ENCODE measurements at regions of chr9 and their contacts with region 1.

Region 1: GRCh38 chr9:4640027-4640426 is 22.1 kb upstream of the PLPP6 start:
- DNase-seq: no peak
- ATAC-seq: no peak

Region 2: DNA sequence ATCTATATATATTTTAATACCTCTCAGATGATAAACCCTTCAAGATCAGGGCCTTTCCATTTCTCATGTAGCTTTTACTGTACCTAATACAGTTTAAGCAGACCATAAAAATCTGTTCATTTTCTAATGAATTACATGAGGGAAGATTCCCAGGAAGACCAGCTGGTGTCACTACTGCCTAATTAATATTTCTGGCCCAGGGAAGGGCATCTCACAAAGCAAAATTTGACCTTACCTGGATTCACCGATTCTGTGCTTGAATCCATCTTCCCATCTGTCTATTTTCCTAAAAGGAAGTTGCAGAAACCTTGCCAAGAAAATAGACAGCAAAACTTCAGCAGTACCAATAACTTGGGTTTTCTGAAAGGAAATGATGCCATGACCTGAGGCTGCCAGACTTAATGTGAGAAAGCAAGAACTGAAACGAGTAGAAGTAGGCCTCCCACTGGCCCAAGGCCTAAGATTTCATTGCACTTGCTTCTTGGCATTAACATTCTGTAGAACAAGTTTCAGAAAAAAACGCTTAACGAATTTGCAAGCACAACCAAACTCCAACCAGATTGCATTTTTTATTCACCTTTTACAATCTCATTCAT is 257.2 kb before region 1 on chr9:
- intact Hi-C with region 1: loop called (anchors 2 kb)
- DNase-seq: no peak
- ATAC-seq: no peak

Measured in Right ventricle myocardium superior (tissue), 1 donor.